ENCODE measurements at regions of chr7 and their contacts with region 1.

Region 1: GRCh38 chr7:26376175-26376917 is 84.7 kb downstream of the SNX10 start:
- DNase-seq: peak in 2 of 5 donors; percentile 23 to 25
- H3K4me3 ChIP-seq: peak overlapping the region; percentile 0
- H3K27ac ChIP-seq: no peak overlapping the region
- H3K4me1 ChIP-seq: peaks cover 2% of the 10 kb centered on the region
- H3K27me3 ChIP-seq: peaks cover 4% of the 10 kb centered on the region
- CTCF ChIP-seq: no peak
- EP300 ChIP-seq: no peak
- POLR2A ChIP-seq: no peak

Region 2: GRCh38 chr7:26667500-26668133 is 291.3 kb after region 1 on chr7:
- intact Hi-C with region 1: loop called in 1 of 4 experiments (anchors 10 kb)
- DNase-seq: peak in 4 of 5 donors; percentile 14 to 39 (median 28)
- H3K4me3 ChIP-seq: no peak overlapping the region
- H3K27ac ChIP-seq: no peak overlapping the region
- H3K4me1 ChIP-seq: no peaks in the 10 kb centered on the region
- H3K27me3 ChIP-seq: no peaks in the 10 kb centered on the region
- CTCF ChIP-seq: peak in 1 of 3 donors; percentile 41
- EP300 ChIP-seq: no peak
- POLR2A ChIP-seq: no peak

Region 3: DNA sequence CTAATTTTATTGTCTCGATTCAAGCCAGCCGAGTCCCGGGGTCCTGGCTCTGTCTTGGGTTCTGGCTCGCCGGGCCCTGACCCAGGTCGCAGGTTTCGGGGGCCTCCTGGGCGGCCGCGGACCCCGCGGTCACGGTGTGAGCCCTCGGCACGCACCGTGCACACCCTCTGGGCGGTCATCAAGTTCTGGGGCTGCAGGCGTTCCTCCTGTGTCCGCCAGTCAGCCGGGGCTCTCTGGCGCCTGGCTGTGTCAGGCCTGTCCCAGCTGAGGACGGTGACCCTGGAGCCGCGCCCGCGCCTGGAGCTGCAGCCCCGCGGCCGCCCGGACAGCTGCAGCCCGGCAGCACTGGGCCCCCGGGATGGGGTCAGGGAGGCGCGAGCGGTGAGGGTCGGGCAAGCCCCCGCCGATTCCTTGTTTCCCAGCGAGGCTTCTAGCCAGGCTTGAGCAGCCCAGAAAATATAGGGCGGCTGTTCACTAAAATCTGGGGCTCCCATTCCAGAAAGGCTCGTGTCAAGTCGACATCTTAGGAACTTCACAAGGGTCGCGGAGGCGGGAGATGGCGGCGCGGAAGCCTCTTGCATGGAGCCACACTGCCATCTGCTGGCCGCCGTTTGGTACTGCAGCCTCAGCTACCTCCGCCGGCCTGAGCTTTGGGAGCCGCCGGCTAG is 784.3 kb after region 1 on chr7:
- intact Hi-C with region 1: loop called in 2 of 4 experiments (anchors 5 to 10 kb)
- DNase-seq: peak; percentile 71 to 89 (median 87)
- H3K4me3 ChIP-seq: peak overlapping the region; percentile 43
- H3K27ac ChIP-seq: no peak overlapping the region
- H3K4me1 ChIP-seq: peaks cover 4% of the 10 kb centered on the region
- H3K27me3 ChIP-seq: peaks cover 9% of the 10 kb centered on the region
- CTCF ChIP-seq: peak; percentile 96 to 98 (median 97)
- EP300 ChIP-seq: no peak
- POLR2A ChIP-seq: no peak